Ascending aorta (tissue), 2 donors: ENCODE measurements at regions of chr19 and their contacts with region 1.

Region 1: GRCh38 chr19:23716792-23717191 is 29.8 kb upstream of the ZNF675 start:
- DNase-seq: no peak
- H3K4me3 ChIP-seq: no peak overlapping the region
- H3K27ac ChIP-seq: no peak overlapping the region
- H3K4me1 ChIP-seq: no peaks in the 10 kb centered on the region
- H3K27me3 ChIP-seq: no peaks in the 10 kb centered on the region
- CTCF ChIP-seq: no peak

Region 2: GRCh38 chr19:22882792-22883191 is 834.0 kb before region 1 on chr19:
- intact Hi-C with region 1: loop called (anchors 10 kb)
- DNase-seq: no peak
- H3K4me3 ChIP-seq: no peak overlapping the region
- H3K27ac ChIP-seq: no peak overlapping the region
- H3K4me1 ChIP-seq: no peaks in the 10 kb centered on the region
- H3K27me3 ChIP-seq: no peaks in the 10 kb centered on the region
- CTCF ChIP-seq: peak in 1 of 3 experiments; percentile 54

Region 3: GRCh38 chr19:23273590-23274413 is 443.0 kb before region 1 on chr19:
- intact Hi-C with region 1: no loop called
- DNase-seq: peak; percentile 88 to 97
- H3K4me3 ChIP-seq: peak overlapping the region; percentile 94 to 99
- H3K27ac ChIP-seq: peak overlapping the region; percentile 91
- H3K4me1 ChIP-seq: peaks cover 3 to 6% of the 10 kb centered on the region in 2 donors
- H3K27me3 ChIP-seq: no peaks in the 10 kb centered on the region
- CTCF ChIP-seq: no peak

Region 4: DNA sequence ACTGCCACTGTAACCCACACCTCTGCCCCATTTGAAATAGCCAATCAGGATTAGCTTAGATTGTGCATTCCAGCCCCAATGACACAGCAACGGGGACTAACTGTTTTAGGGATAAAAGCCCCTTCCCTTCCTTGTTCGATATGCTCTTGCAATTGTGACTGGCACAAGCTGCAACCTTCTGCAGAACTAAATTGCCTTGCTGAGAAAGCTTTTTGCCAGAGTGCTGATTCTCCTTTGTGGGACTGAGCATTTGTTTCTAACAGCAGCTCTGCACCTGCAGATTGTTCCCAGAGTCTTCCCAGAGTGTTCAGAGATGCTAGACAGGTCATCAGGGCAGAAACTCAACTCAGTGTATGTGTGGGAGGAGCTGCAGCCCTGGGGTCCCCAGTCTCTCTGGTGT is 145.6 kb before region 1 on chr19:
- intact Hi-C with region 1: no loop called
- DNase-seq: no peak
- H3K4me3 ChIP-seq: no peak overlapping the region
- H3K27ac ChIP-seq: no peak overlapping the region
- H3K4me1 ChIP-seq: no peaks in the 10 kb centered on the region
- H3K27me3 ChIP-seq: no peaks in the 10 kb centered on the region
- CTCF ChIP-seq: no peak